IMR-90 (cell line): ENCODE measurements at regions of chr5 and their contacts with region 1.

Region 1: GRCh38 chr5:141557681-141558136 is 61.1 kb downstream of the DIAPH1 start:
- DNase-seq: peak; percentile 100
- ATAC-seq: peak; percentile 92
- H3K4me3 ChIP-seq: peak overlapping the region; percentile 2; the same call in 1 of the 2 replicates
- H3K27ac ChIP-seq: peak overlapping the region; percentile 19
- H3K4me1 ChIP-seq: peaks cover 7% of the 10 kb centered on the region
- H3K27me3 ChIP-seq: no peaks in the 10 kb centered on the region
- CTCF ChIP-seq: peak; percentile 96
- POLR2A ChIP-seq: peak; percentile 35; the same call in 1 of the 2 replicates
- RAD21 ChIP-seq: peak; percentile 95

Region 2: DNA sequence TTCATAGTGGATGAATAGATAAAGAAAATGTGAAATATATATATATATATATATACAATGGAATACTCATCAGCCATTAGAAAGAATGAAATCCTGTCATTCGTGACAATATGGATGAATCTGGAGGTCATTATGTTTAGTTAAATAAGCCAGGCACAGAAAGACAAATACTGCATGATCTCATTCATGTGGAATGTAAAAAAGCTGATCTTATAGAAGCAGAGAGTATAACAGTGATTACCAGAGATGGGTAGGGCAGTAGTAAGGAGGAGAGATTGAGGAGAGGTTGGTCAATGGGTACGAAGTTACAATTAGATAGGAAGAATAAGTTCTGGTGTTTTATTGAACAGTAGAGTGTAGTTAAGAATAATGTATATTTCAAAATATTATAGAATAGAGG is 611.1 kb before region 1 on chr5:
- CTCF ChIA-PET with region 1: no interaction called
- POLR2A ChIA-PET with region 1: no interaction called
- dilution Hi-C with region 1: no loop called
- in situ Hi-C with region 1: no loop called
- intact Hi-C with region 1: no loop called
- DNase-seq: no peak
- ATAC-seq: no peak
- H3K4me3 ChIP-seq: no peak overlapping the region
- H3K27ac ChIP-seq: no peak overlapping the region
- H3K4me1 ChIP-seq: no peaks in the 10 kb centered on the region
- H3K27me3 ChIP-seq: no peaks in the 10 kb centered on the region
- CTCF ChIP-seq: no peak
- POLR2A ChIP-seq: no peak
- RAD21 ChIP-seq: no peak

Region 3: DNA sequence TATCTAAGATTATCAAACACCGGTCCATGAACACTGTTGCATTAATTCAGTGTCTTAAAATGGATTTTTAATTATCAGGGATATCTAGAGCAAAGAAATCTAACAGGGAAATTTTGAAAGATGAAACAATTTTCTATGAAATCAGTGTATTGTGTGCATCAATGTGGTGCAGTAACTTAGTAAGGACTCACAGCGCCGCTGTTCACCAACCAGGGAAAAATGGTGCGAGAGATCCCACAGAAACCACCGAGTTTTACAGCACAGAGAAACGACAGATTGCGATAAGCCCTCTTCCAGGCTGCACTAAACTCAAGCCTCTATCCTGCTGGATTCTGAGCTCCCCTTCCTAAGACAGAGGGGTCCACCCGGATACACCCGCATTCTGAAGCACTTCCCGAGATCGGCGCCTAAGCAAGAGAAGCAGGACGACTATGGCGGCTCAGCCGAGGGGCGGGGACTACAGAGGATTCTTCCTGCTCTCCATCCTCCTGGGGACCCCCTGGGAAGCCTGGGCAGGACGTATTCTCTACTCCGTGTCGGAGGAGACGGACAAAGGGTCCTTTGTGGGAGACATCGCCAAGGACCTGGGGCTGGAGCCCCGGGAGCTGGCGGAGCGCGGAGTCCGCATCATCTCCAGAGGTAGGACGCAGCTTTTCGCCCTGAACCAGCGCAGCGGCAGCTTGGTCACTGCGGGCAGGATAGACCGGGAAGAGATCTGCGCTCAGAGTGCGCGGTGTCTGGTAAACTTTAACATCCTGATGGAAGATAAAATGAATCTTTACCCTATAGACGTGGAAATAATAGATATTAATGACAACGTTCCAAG is 175.0 kb before region 1 on chr5 and contains the start of gene PCDHGA7:
- CTCF ChIA-PET with region 1: interaction called, 3 read pairs
- POLR2A ChIA-PET with region 1: no interaction called
- dilution Hi-C with region 1: no loop called
- in situ Hi-C with region 1: no loop called
- intact Hi-C with region 1: loop called (anchors 1 kb)
- DNase-seq: peak; percentile 57
- ATAC-seq: peak; percentile 89
- H3K4me3 ChIP-seq: peak within 1 kb of the TSS; percentile 83
- H3K27ac ChIP-seq: peak within 1 kb of the TSS; percentile 73
- H3K4me1 ChIP-seq: no peaks in the 10 kb centered on the region
- H3K27me3 ChIP-seq: no peaks in the 10 kb centered on the region
- CTCF ChIP-seq: peak; percentile 54
- POLR2A ChIP-seq: no peak
- RAD21 ChIP-seq: peak; percentile 48
- total RNA-seq, gene PCDHGA7: 3.3 and 3.4 TPM in 2 replicates

Region 4: DNA sequence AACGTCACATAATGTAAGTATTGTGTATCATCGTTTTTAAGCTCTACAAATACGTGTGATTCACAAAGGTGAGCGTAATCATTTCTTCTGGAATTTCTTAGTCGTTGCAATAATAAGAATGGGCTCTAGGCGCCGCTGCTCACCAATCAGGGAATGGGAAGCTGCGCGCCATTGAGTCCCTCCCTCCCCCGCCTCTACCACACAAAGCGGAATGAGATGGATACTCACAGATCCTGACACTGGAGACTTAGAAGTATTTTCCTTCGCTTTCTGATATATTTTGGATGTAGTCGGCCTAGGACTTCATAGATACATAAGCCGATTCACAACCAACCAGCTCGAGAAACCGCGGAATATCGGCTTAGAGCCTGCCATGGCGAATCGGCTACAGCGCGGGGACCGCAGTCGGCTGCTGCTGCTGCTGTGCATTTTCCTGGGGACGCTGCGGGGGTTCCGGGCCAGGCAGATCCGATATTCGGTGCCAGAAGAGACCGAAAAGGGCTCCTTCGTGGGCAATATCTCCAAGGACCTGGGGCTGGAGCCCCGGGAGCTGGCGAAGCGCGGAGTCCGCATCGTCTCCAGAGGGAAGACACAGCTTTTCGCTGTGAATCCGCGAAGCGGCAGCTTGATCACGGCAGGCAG is 136.7 kb before region 1 on chr5 and contains the start of gene PCDHGA11:
- CTCF ChIA-PET with region 1: interaction called, 34 read pairs
- POLR2A ChIA-PET with region 1: no interaction called
- dilution Hi-C with region 1: no loop called
- in situ Hi-C with region 1: loop called (anchors 5 kb)
- intact Hi-C with region 1: loop called (anchors 1 kb)
- DNase-seq: peak; percentile 63
- ATAC-seq: peak; percentile 57
- H3K4me3 ChIP-seq: peak within 1 kb of the TSS; percentile 54
- H3K27ac ChIP-seq: peak within 1 kb of the TSS; percentile 26; the same call in 1 of the 2 replicates
- H3K4me1 ChIP-seq: no peaks in the 10 kb centered on the region
- H3K27me3 ChIP-seq: no peaks in the 10 kb centered on the region
- CTCF ChIP-seq: peak; percentile 64
- POLR2A ChIP-seq: no peak
- RAD21 ChIP-seq: peak; percentile 70
- total RNA-seq, gene PCDHGA11: 5.4 and 5.8 TPM in 2 replicates

Region 5: GRCh38 chr5:141512390-141512910 is 45.3 kb before region 1 on chr5:
- CTCF ChIA-PET with region 1: interaction called, 14 read pairs
- POLR2A ChIA-PET with region 1: no interaction called
- dilution Hi-C with region 1: no loop called
- in situ Hi-C with region 1: no loop called
- intact Hi-C with region 1: no loop called
- DNase-seq: peak; percentile 54
- ATAC-seq: no peak
- H3K4me3 ChIP-seq: no peak overlapping the region
- H3K27ac ChIP-seq: peak overlapping the region; percentile 84
- H3K4me1 ChIP-seq: peaks cover 57% of the 10 kb centered on the region
- H3K27me3 ChIP-seq: no peaks in the 10 kb centered on the region
- CTCF ChIP-seq: peak; percentile 62
- POLR2A ChIP-seq: no peak
- RAD21 ChIP-seq: peak; percentile 44